ENCODE measurements at regions of chr16 and their contacts with region 1.

Region 1: GRCh38 chr16:22665048-22665797 is 148.7 kb upstream of the HS3ST2 start:
- DNase-seq: no peak
- ATAC-seq: no peak

Region 2: DNA sequence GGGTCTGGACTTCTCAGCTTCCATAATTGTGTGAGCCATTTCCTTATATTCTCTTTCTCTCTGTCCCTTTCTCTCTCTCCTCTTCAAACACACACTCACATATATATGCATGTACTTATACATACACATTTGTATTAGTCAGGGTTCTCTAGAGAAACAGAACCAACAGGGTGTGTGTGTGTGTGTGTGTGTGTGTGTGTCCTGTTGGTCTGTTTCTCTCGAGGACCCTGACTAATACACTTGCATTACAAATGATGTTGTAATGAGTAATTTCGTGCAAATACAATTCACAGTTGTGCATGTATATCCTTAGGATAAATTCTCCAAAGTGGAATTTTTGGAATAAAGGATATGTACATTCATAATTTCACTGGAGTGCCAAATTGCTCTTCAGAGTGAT is 39.3 kb before region 1 on chr16:
- intact Hi-C with region 1: loop called in 1 of 2 experiments (anchors 5 kb)
- DNase-seq: no peak
- ATAC-seq: no peak